PC-3 (cell line): ENCODE measurements at regions of chr3 and their contacts with region 1.

Region 1: DNA sequence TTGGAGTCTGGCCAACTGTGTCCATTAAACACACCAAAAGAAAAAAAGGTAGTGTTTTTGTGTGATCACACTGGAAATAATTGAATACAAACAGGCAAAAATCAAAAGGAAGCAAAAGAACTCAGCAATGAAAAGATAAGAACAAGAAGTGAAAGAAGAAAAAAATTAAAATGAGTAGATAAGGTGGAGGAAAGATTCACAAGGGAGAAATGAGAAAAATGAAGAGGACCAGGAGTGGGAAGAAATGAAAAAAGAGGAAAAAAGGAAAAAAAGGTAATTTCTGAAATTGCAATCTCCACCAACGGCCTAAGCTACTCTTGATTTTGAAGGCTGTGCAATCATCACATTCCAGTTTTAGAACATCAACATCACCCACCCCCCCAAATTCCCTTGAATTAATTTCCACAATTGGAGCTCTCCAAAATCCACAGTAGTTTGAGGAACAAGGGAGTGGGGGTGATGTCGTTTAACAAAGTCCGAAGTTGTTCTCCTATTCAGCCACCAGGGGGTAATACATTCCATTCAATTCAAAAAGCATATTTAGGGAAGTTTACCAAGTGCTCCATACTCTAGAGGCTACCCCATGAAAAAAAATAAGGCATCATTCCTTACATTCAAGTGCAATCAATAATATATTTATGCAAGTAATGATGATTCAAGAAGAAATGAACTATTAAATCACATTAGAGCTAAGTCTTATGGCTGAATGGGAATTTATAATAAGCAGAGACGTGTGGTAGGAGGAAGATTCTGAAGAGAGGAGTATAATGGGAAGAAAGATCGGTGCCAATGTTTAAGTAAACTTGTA is 37.4 kb downstream of the ZNF860 start:
- DNase-seq: peak; percentile 78
- ATAC-seq: peak; percentile 73
- H3K4me3 ChIP-seq: peak overlapping the region; percentile 13; the same call in 1 of the 2 replicates
- H3K27ac ChIP-seq: peak overlapping the region; percentile 73
- H3K4me1 ChIP-seq: peaks cover 11% of the 10 kb centered on the region
- H3K27me3 ChIP-seq: no peaks in the 10 kb centered on the region
- CTCF ChIP-seq: peak; percentile 91

Region 2: DNA sequence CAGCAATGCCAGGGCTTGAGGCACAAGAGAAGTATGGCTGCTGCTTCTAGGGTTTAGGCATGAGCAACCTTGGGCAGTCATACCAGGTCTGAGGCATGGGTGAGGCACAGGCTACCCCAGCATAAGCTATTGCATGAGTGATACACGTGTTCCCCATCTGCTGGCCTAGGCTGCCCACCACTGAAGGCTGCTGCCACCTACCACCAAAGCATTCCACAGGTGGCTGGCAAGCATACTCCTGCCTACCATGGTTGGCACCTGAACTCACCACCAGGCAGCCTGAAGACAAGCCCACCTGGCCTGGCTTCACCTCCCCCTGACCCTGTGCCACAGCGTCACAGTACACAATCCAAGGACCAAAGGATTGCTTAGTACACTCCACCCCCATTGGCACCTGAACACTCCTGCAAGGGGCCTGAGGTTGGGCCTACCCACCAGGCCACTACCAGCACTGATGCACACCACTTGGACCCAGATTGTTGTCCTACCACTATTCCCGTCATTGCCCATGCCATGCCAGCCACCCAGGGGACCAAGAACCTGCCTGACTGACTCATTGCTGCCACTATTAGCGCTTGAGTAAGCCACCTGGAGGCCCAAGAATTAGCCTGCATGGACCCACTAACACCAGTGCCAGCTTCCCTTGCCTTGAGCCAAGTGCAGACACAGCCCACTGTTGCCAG is 370.5 kb before region 1 on chr3:
- CTCF ChIA-PET with region 1: no interaction called
- POLR2A ChIA-PET with region 1: no interaction called
- intact Hi-C with region 1: no loop called
- DNase-seq: no peak
- ATAC-seq: peak; percentile 13
- H3K4me3 ChIP-seq: no peak overlapping the region
- H3K27ac ChIP-seq: no peak overlapping the region
- H3K4me1 ChIP-seq: 0 out of 2 replicates have a peak, but pooled peaks cover 4% of the 10 kb centered on the region
- H3K27me3 ChIP-seq: no peaks in the 10 kb centered on the region
- CTCF ChIP-seq: no peak

Region 3: DNA sequence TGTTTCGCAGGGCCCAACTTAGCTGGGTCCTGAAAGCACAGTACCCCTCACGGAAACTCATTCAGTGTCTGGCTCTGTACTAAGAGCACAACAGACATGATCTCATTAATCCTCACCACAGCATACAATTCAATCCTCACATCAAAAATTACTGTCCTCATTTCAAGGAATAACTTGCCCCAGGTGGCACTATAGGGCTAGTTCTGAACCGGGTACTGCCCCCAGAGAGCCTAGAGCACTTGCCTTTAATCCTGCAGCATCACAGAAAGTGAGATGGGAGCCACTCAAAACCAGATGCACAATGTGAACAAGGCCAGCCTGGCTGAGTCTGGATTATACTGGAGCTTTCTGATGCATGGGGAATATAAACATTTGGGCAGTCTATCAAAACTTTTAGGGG is 160.5 kb before region 1 on chr3:
- CTCF ChIA-PET with region 1: interaction called, 3 read pairs
- POLR2A ChIA-PET with region 1: no interaction called
- intact Hi-C with region 1: loop called (anchors 1 kb)
- DNase-seq: peak; percentile 48
- ATAC-seq: peak; percentile 78
- H3K4me3 ChIP-seq: no peak overlapping the region
- H3K27ac ChIP-seq: no peak overlapping the region
- H3K4me1 ChIP-seq: no peaks in the 10 kb centered on the region
- H3K27me3 ChIP-seq: no peaks in the 10 kb centered on the region
- CTCF ChIP-seq: peak; percentile 54

Region 4: DNA sequence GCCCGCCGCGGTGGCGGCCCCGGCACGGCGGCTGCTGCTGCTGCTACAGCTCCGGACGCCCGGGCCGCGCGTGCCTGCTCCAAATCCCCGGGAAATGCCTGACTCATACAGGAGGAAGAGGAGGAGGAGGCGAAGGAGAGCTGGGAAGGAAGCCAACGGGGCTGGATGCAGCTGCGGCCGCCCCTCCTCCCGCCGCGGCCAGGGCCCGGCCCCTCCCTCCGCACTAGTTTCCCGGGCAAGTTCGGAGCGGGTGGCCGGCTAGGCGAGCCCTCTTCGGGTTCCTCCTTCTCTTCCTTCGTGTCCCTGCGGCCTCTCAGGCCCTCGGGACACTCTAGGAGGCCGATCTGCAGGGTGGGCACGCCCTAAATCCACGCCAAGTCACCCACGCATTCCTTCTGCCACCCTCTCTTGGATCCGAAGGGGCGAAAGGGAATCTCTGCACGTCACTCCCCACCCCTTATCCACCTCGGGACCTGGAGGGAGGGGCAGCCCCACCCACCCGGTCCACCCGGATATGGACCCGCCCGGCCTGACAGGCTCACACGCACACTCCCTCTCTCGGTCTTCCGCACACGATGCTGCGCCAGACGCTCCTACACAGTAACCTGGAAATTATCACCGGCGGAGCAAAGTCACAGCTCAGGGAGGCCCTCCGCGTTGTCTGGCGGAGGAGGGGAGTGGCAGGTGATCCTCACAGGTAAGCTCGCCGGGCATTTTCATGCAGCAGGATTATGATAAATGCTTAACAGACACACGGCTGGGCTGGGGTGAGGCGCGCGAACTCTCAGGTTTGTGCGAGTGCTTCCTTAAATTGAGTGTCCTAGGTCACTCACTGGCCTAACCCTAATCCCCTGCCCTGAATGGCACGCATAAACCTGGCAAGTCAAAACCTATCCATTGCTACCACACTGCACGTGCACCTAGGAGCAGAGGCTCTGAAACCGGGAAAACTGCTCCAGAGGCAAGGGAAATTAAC is 37.5 kb before region 1 on chr3 and contains the starts of genes OSBPL10 and ZNF860:
- CTCF ChIA-PET with region 1: interaction called, 8 read pairs
- POLR2A ChIA-PET with region 1: no interaction called
- intact Hi-C with region 1: loop called (anchors 1 kb)
- DNase-seq: peak; percentile 96
- ATAC-seq: peak; percentile 66
- H3K4me3 ChIP-seq: peak within 1 kb of the TSS; percentile 89
- H3K27ac ChIP-seq: peak within 1 kb of the TSS; percentile 87
- H3K4me1 ChIP-seq: peaks cover 56% of the 10 kb centered on the region
- H3K27me3 ChIP-seq: no peaks in the 10 kb centered on the region
- CTCF ChIP-seq: no peak
- total RNA-seq, gene OSBPL10: 34.6 and 48.0 TPM in 2 replicates
- total RNA-seq, gene ZNF860: 7.9 and 10.5 TPM in 2 replicates

Region 5: GRCh38 chr3:32082721-32083120 is 63.8 kb after region 1 on chr3:
- CTCF ChIA-PET with region 1: no interaction called
- POLR2A ChIA-PET with region 1: no interaction called
- intact Hi-C with region 1: loop called (anchors 1 kb)
- DNase-seq: peak; percentile 14
- ATAC-seq: peak; percentile 83
- H3K4me3 ChIP-seq: no peak overlapping the region
- H3K27ac ChIP-seq: no peak overlapping the region
- H3K4me1 ChIP-seq: peaks cover 9% of the 10 kb centered on the region
- H3K27me3 ChIP-seq: no peaks in the 10 kb centered on the region
- CTCF ChIP-seq: no peak

Region 6: GRCh38 chr3:32143849-32144757 is 125.1 kb after region 1 on chr3:
- CTCF ChIA-PET with region 1: interaction called, 21 read pairs
- POLR2A ChIA-PET with region 1: no interaction called
- intact Hi-C with region 1: loop called (anchors 1 kb)
- DNase-seq: peak; percentile 99
- ATAC-seq: peak; percentile 82
- H3K4me3 ChIP-seq: no peak overlapping the region
- H3K27ac ChIP-seq: 0 out of 2 replicates have a peak overlapping the region, but pooled peaks have one; percentile 16
- H3K4me1 ChIP-seq: peaks cover 42% of the 10 kb centered on the region
- H3K27me3 ChIP-seq: no peaks in the 10 kb centered on the region
- CTCF ChIP-seq: peak; percentile 93